Psoas muscle (tissue), 8 donors: ENCODE measurements at regions of chr15 and their contacts with region 1.

Region 1: GRCh38 chr15:85520650-85521049 is 140.2 kb downstream of the AKAP13 start:
- DNase-seq: no peak
- ATAC-seq: no peak
- H3K4me3 ChIP-seq: no peak overlapping the region
- H3K27ac ChIP-seq: no peak overlapping the region
- H3K4me1 ChIP-seq: no peaks in the 10 kb centered on the region
- H3K27me3 ChIP-seq: no peaks in the 10 kb centered on the region
- CTCF ChIP-seq: no peak

Region 2: DNA sequence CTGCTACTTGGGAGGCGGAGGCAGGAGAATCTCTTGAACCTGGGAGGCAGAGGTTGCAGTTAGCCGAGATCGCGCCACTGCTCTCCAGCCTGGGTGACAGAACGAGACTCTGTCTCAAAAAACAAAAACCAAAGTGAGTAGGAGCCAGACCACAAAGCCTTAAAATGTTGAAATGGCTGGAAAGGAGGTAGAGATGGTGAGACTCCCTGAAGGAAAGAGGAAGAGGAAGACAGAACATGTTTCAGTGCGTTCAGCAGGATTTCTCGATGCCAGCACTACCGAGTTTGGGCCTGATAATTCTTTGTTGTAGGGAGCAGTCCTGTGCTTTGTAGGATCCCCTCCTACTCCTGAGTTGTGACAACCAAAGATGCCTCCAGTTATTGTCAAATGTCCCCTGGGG is 49.7 kb after region 1 on chr15:
- intact Hi-C with region 1: loop called in 1 of 2 experiments (anchors 5 kb)
- DNase-seq: no peak
- ATAC-seq: no peak
- H3K4me3 ChIP-seq: no peak overlapping the region
- H3K27ac ChIP-seq: no peak overlapping the region
- H3K4me1 ChIP-seq: peaks cover 4% of the 10 kb centered on the region
- H3K27me3 ChIP-seq: no peaks in the 10 kb centered on the region
- CTCF ChIP-seq: no peak